ENCODE measurements at regions of chr11 and their contacts with region 1.

Region 1: DNA sequence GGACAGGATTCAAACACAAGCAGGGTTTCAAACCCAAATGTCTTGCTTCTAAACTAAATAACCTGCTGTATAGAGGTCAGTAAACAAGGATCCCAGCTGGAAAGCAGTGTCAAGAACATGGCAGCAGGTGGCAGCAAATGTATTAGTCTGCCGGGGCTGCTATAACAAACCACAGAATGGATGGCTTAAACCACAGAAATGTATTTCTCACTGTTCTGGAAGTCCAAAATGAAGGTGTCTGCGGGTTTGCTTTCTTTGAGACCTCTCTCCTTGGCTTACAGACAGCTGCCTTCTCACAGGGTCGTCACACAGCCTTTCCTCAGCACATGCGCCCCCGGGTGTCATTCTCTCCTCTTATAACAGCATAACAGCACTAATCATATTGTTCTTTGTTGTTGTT is 65.1 kb upstream of the LRRC55 start:
- DNase-seq: peak; percentile 37
- H3K4me3 ChIP-seq: no peak overlapping the region
- H3K27ac ChIP-seq: no peak overlapping the region
- H3K4me1 ChIP-seq: no peaks in the 10 kb centered on the region
- CTCF ChIP-seq: peak; percentile 77

Region 2: GRCh38 chr11:56841210-56841810 is 275.3 kb before region 1 on chr11:
- CTCF ChIA-PET with region 1: no interaction called
- POLR2A ChIA-PET with region 1: no interaction called
- intact Hi-C with region 1: loop called (anchors 10 kb)
- DNase-seq: peak; percentile 48
- H3K4me3 ChIP-seq: no peak overlapping the region
- H3K27ac ChIP-seq: no peak overlapping the region
- H3K4me1 ChIP-seq: no peaks in the 10 kb centered on the region
- CTCF ChIP-seq: peak; percentile 90

Region 3: DNA sequence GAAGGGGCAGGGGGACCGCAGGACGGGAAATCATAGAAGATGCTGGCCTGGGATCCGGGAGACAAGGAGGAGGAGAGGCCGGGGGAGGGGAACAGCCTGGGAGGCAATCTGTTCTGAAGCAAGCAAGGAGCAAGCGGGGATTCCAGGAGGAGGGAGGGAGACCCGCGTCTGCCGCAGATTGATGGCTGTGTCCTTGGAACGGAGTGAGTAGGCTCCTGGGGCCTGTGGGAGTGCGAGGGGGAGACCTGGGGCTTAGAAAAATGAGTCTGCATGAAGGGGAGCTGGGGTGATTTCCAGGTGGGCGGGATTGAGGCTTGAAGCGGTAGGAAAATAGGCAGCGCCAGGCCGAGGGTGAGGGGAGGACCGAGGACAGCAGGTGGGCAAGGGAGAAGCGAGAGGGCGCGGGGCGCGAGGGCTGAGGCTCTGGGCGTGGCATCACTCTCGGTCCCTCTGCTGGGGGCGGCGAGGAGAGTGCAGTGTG is 63.5 kb after region 1 on chr11:
- CTCF ChIA-PET with region 1: no interaction called
- POLR2A ChIA-PET with region 1: no interaction called
- intact Hi-C with region 1: no loop called
- DNase-seq: no peak
- H3K4me3 ChIP-seq: no peak overlapping the region
- H3K27ac ChIP-seq: no peak overlapping the region
- H3K4me1 ChIP-seq: no peaks in the 10 kb centered on the region
- CTCF ChIP-seq: no peak